ENCODE measurements at regions of chr15 and their contacts with region 1.

Region 1: DNA sequence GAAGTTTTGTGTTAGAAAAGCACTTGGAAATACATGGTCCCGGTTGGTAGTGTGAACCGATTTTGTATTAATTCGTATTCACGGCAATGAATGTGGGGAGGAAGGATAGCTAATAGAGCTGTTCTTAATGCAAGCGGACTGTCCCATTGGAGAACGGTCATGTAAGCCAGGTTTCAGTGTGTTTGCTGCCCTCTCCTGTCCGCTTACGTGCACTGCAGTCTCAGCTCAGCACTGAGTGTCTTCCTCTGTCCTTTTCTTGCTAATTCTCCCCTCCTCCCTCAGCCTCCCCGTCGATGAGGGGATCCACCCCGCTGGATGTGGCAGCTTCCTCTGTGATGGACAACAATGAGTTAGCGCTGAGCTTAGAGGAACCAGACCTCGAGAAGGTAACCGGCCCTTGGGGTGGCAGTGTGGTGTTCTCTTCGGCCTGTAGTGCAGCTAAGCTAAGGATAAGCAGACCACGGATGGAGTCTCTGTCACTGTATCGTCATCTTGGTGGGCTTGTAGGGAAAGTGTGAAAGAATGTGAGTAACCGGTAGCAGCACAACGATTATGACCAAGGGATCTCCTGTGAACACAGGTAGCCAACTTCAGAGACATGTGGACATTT is 267.5 kb upstream of the CHRM5 start:
- DNase-seq: peak; percentile 43
- H3K4me3 Mint-ChIP-seq: no peak overlapping the region
- H3K27ac Mint-ChIP-seq: no peak overlapping the region
- H3K4me1 Mint-ChIP-seq: no peaks in the 10 kb centered on the region
- H3K27me3 Mint-ChIP-seq: peaks cover 33% of the 10 kb centered on the region
- CTCF ChIP-seq: peak; percentile 28

Region 2: DNA sequence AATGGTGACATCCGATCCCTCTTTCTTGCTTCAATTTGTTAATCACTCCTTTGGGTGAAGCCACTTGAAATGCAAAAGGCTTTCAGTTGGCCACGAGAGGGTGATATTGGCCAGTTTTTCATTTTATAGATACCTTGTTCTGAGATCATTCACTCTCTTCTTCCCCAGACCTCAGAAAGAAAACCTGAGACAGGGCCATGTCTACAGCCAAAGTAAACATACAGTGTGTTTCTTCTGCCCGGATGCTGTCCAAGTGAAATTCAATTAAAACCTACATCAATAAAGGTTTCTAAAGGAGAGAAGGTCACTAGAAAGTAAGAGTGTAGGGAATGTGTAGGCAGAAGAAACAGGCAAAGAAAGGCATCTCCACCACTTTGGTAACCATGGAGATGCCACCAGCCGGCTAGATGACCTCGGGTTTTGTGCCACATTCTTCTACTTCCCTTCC is 466.8 kb before region 1 on chr15:
- CTCF ChIA-PET with region 1: no interaction called
- intact Hi-C with region 1: loop called (anchors 1 kb)
- DNase-seq: peak; percentile 1
- H3K4me3 Mint-ChIP-seq: no peak overlapping the region
- H3K27ac Mint-ChIP-seq: no peak overlapping the region
- H3K4me1 Mint-ChIP-seq: no peaks in the 10 kb centered on the region
- H3K27me3 Mint-ChIP-seq: peaks cover 10% of the 10 kb centered on the region
- CTCF ChIP-seq: no peak

Region 3: DNA sequence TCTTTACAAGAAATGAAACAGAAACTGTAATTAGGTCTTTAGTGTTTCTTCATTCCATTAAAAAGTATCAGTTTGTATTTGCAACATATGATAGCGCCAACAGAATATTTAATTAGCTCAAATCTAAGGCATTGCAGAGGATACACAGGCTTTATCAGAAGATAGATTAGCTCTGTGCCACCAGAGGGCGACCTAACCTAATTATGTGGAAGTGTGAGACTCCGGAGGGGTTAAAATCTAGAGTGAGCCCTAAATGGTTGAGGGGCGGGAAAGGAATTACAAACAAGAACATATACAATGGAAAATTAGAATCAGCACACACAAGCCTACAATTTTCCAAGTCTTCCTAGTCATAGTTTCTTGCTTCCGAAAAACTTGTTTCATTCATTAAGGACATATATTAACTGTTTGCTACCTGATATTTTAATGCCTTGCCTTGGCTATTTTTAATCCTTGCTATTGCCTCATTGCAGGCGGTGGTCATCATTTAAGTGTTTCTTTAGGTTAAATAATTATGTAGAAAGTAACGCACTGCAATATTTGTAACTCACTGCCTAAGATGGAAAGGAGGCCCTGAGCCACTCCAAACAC is 408.0 kb before region 1 on chr15:
- CTCF ChIA-PET with region 1: interaction called, 19 read pairs
- intact Hi-C with region 1: loop called (anchors 2 kb)
- DNase-seq: peak; percentile 43
- H3K4me3 Mint-ChIP-seq: no peak overlapping the region
- H3K27ac Mint-ChIP-seq: no peak overlapping the region
- H3K4me1 Mint-ChIP-seq: no peaks in the 10 kb centered on the region
- H3K27me3 Mint-ChIP-seq: peaks cover 15% of the 10 kb centered on the region
- CTCF ChIP-seq: peak; percentile 12

Region 4: GRCh38 chr15:34217587-34218225 is 516.9 kb after region 1 on chr15:
- CTCF ChIA-PET with region 1: no interaction called
- intact Hi-C with region 1: no loop called
- DNase-seq: no peak
- H3K4me3 Mint-ChIP-seq: no peak overlapping the region
- H3K27ac Mint-ChIP-seq: no peak overlapping the region
- H3K4me1 Mint-ChIP-seq: no peaks in the 10 kb centered on the region
- H3K27me3 Mint-ChIP-seq: no peaks in the 10 kb centered on the region
- CTCF ChIP-seq: no peak

Measured in Calu3 (cell line).